ENCODE measurements at regions of chr7 and their contacts with region 1.

Region 1: GRCh38 chr7:94087664-94088352 is 83.7 kb upstream of the BET1 start:
- DNase-seq: peak; percentile 68
- H3K4me3 Mint-ChIP-seq: peak overlapping the region; percentile 25
- H3K27ac Mint-ChIP-seq: no peak overlapping the region
- H3K4me1 Mint-ChIP-seq: peaks cover 4% of the 10 kb centered on the region
- H3K27me3 Mint-ChIP-seq: peaks cover 14% of the 10 kb centered on the region

Region 2: GRCh38 chr7:93902777-93903423 is 184.9 kb before region 1 on chr7:
- CTCF ChIA-PET with region 1: interaction called, 25 read pairs
- DNase-seq: no peak
- H3K4me3 Mint-ChIP-seq: no peak overlapping the region
- H3K27ac Mint-ChIP-seq: no peak overlapping the region
- H3K4me1 Mint-ChIP-seq: no peaks in the 10 kb centered on the region
- H3K27me3 Mint-ChIP-seq: no peaks in the 10 kb centered on the region

Measured in activated naive CD4-positive, alpha-beta T cell treated with anti-CD3 and anti-CD28 coated beads, Interleukin-2, amount 10 ng/mL, durations not matched to agents 7 days and 5 days (primary cell).